ENCODE measurements at regions of chr14 and their contacts with region 1.

Region 1: DNA sequence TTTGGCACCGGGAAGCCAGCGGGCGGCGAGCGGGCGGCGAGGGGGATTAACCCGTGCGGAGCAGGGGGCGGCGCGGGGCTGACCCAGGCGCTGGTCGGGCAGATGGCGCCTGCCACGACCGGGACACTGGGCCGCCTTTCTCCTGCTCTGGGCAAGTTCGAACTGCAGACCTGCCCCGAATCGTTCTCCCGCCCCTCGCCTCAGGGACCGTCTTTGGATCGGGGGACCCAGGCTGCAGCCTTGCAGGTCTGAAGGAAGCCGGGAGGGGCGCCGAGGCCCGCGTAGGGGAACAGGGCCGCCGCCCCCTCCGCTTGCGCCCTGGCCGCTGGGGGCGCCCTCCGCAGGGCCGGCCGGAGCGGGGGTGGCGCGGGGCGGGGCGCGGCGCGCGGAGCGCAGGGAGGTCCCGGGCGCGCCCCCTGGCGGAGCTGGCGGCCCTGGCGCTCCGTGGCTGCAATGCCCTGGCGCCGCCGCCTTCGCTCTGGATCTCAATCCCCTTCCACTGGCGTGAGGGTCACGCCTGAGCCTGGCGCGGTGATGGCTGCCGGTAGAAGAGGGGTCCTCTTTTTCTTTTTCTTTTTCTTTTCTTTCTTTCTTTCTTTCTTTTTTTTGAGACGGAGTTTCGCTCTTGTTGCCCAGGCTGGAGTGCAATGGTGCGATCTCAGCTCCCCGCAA is 449 bp upstream of the LTBP2 start:
- DNase-seq: peak; percentile 85
- H3K4me3 Mint-ChIP-seq: peak overlapping the region; percentile 64
- H3K27ac Mint-ChIP-seq: no peak overlapping the region
- H3K4me1 Mint-ChIP-seq: peaks cover 34% of the 10 kb centered on the region
- H3K27me3 Mint-ChIP-seq: peaks cover 14% of the 10 kb centered on the region

Region 2: GRCh38 chr14:74579447-74580274 is 32.8 kb before region 1 on chr14:
- CTCF ChIA-PET with region 1: interaction called, 12 read pairs
- POLR2A ChIA-PET with region 1: no interaction called
- intact Hi-C with region 1: no loop called
- DNase-seq: peak; percentile 70
- H3K4me3 Mint-ChIP-seq: no peak overlapping the region
- H3K27ac Mint-ChIP-seq: peak overlapping the region; percentile 82
- H3K4me1 Mint-ChIP-seq: peaks cover 28% of the 10 kb centered on the region
- H3K27me3 Mint-ChIP-seq: no peaks in the 10 kb centered on the region

Region 3: DNA sequence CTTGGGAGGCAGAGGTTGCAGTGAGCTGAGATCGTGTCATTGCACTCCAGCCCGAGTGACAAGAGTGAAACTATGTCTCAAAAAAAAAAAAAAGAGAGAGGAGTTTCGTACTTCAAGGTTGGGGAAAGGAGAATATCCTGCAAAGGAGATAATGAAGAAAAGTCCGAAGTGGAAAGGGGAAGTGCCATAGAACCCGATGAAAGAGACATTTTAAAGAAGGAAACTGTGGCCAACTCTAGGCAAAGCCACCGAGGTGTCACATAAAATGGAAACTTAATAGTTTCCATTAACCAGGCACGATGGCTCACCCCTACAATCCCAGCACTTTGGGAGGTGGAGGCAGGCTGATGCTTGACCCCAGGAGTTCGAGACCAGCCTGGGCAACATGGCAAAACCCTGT is 14.6 kb after region 1 on chr14:
- CTCF ChIA-PET with region 1: interaction called, 57 read pairs
- POLR2A ChIA-PET with region 1: no interaction called
- intact Hi-C with region 1: no loop called
- DNase-seq: no peak
- H3K4me3 Mint-ChIP-seq: no peak overlapping the region
- H3K27ac Mint-ChIP-seq: no peak overlapping the region
- H3K4me1 Mint-ChIP-seq: no peaks in the 10 kb centered on the region
- H3K27me3 Mint-ChIP-seq: no peaks in the 10 kb centered on the region

Region 4: DNA sequence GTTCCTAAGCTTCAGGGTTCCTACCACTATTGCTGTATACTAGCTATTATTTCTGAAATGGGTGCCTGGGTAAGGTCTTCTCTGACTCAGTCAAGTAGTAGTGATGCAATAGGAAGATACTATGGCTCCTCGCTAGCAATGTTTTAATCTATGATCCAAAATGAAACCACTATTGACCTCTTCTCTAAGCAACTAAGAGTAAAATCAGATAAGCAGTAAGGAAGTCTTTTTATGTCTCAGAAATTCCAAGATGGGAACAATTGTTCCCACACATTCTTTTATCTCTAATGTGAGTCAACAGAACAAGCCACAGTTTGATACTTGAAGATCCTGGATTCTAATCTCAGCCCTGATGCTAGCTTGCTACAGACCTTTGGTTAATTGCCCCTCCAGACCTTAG is 55.3 kb after region 1 on chr14:
- CTCF ChIA-PET with region 1: interaction called, 10 read pairs
- POLR2A ChIA-PET with region 1: no interaction called
- intact Hi-C with region 1: no loop called
- DNase-seq: no peak
- H3K4me3 Mint-ChIP-seq: no peak overlapping the region
- H3K27ac Mint-ChIP-seq: peak overlapping the region; percentile 65
- H3K4me1 Mint-ChIP-seq: peaks cover 9% of the 10 kb centered on the region
- H3K27me3 Mint-ChIP-seq: no peaks in the 10 kb centered on the region

Region 5: GRCh38 chr14:74762917-74763802 is 150.7 kb after region 1 on chr14 and contains the start of gene YLPM1:
- CTCF ChIA-PET with region 1: interaction called, 13 read pairs
- POLR2A ChIA-PET with region 1: no interaction called
- intact Hi-C with region 1: no loop called
- DNase-seq: peak; percentile 95
- H3K4me3 Mint-ChIP-seq: peak within 1 kb of the TSS; percentile 94
- H3K27ac Mint-ChIP-seq: peak within 1 kb of the TSS; percentile 91
- H3K4me1 Mint-ChIP-seq: peaks cover 44% of the 10 kb centered on the region
- H3K27me3 Mint-ChIP-seq: no peaks in the 10 kb centered on the region
- total RNA-seq, gene YLPM1: 46.3 to 51.8 TPM

Region 6: DNA sequence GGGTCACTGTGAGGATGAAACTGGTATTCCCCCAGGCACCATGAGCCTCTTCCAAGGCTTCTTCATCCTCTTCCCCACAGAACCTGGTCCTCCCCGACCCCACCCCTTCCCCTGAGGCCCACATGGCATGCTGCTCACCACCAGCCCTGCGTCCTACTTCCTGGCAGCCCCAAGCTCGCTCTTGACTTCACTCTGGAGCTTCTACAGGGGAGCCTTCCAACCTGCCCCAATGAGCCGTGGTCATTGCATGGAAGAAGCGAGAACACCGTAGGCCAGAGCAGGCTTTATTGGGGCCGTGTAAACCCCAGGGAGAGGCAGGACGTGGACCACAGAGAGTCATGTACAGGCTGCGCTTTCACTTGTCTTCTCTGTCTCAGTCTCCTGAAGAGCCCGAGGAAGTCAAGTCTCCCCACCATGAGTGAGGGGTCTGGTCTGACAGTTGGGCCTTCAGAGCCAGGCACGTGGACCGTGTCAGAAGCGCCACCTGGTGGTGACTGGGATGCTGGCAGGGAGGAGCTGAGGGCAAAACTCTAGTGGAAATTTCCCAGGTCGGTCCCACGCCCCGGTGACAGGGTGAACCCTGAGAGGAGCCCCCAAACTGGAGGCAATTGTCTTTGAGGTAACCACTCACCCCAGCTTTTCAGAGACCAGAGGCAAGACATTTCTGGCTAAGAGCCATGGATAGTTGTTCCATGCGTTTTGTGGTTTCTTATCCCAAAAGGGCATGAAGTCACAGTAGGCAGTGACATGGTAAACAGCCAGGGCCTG is 293.1 kb after region 1 on chr14:
- CTCF ChIA-PET with region 1: interaction called, 10 read pairs
- POLR2A ChIA-PET with region 1: no interaction called
- intact Hi-C with region 1: loop called (anchors 1 kb)
- DNase-seq: peak; percentile 83
- H3K4me3 Mint-ChIP-seq: no peak overlapping the region
- H3K27ac Mint-ChIP-seq: peak overlapping the region; percentile 8
- H3K4me1 Mint-ChIP-seq: no peaks in the 10 kb centered on the region
- H3K27me3 Mint-ChIP-seq: no peaks in the 10 kb centered on the region